ENCODE measurements at regions of chr6 and their contacts with region 1.

Region 1: DNA sequence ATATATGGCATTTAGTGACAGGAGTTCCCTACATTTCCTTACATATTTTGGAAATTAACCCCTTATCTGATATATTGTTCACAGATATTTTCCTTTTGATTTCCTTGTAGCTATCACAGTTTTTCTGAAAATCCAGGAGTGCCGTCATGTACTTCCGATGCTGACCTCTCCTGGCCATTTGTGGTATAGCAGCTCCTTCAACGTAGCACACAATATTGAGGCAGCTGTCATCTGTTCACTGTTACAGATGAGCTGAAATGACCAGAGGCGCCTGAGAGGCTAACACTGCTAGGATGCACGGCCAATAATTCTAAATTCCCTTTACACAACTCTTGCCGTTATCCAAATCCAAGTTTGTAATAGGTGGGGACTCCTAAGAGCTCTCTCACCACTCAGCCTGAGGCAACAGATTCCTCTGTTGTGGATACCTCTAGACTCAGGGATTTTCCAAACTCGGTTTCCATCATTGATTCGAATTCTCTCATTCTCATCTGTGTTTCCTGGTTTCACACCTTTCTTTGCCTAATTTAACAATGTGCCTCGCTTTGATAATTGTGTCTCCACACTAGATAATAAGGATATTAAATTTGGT is 53.0 kb downstream of the MMUT start:
- DNase-seq: peak; percentile 54 to 78
- ATAC-seq: peak; percentile 68
- H3K4me3 ChIP-seq: no peak overlapping the region
- H3K27ac ChIP-seq: no peak overlapping the region
- H3K4me1 ChIP-seq: no peaks in the 10 kb centered on the region
- H3K27me3 ChIP-seq: no peaks in the 10 kb centered on the region

Region 2: GRCh38 chr6:47787620-47788497 is 1622.2 kb before region 1 on chr6:
- intact Hi-C with region 1: loop called in 1 of 2 experiments (anchors 5 kb)
- DNase-seq: peak; percentile 41 to 80
- ATAC-seq: no peak
- H3K4me3 ChIP-seq: no peak overlapping the region
- H3K27ac ChIP-seq: no peak overlapping the region
- H3K4me1 ChIP-seq: no peaks in the 10 kb centered on the region
- H3K27me3 ChIP-seq: no peaks in the 10 kb centered on the region

Region 3: GRCh38 chr6:50198245-50198644 is 788.2 kb after region 1 on chr6:
- intact Hi-C with region 1: no loop called
- DNase-seq: no peak
- ATAC-seq: no peak
- H3K4me3 ChIP-seq: no peak overlapping the region
- H3K27ac ChIP-seq: no peak overlapping the region
- H3K4me1 ChIP-seq: no peaks in the 10 kb centered on the region
- H3K27me3 ChIP-seq: no peaks in the 10 kb centered on the region